Activated B cell treated with CpG ODN at 0.5 μM for 24 hours (primary cell): ENCODE measurements at regions of chr9 and their contacts with region 1.

Region 1: DNA sequence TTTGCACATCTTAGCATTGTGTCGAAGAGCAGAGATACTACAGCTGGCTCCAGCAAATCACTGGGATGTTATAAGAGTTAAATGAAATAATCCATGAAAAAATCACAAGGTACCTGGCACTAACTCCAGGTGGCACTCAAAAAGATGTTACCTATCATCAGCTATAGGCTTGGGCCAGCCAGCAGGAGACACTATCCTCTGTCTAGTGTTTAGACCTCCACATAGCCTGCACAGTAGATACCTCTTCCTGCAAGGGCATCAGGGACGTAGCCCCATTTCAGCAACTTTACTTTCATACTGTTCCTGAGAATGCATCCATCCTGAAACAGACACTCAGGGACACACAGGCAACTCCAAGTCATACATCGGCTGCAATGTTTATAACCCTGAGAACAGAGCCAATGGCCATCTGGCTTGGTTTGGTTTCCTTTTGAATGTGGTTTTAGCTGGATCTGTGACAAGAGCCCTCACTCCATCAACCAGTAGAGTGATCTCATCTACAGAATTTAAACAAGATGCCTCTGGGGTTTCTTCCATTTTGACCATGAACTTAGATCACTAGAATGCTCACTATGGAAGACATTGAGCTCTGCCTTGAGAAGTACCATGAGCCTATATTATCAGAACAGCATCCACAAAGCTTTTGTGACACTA is 69.9 kb downstream of the TLE1 start:
- DNase-seq: no peak
- ATAC-seq: peak; percentile 45
- H3K4me3 Mint-ChIP-seq: peak overlapping the region; percentile 24
- H3K27ac Mint-ChIP-seq: no peak overlapping the region
- H3K4me1 Mint-ChIP-seq: peaks cover 40% of the 10 kb centered on the region
- H3K27me3 Mint-ChIP-seq: no peaks in the 10 kb centered on the region
- CTCF ChIP-seq: no peak

Region 2: GRCh38 chr9:81305561-81306182 is 313.8 kb before region 1 on chr9:
- CTCF ChIA-PET with region 1: no interaction called
- POLR2A ChIA-PET with region 1: no interaction called
- intact Hi-C with region 1: no loop called
- DNase-seq: no peak
- ATAC-seq: no peak
- H3K4me3 Mint-ChIP-seq: no peak overlapping the region
- H3K27ac Mint-ChIP-seq: no peak overlapping the region
- H3K4me1 Mint-ChIP-seq: no peaks in the 10 kb centered on the region
- H3K27me3 Mint-ChIP-seq: no peaks in the 10 kb centered on the region
- CTCF ChIP-seq: no peak

Region 3: GRCh38 chr9:81632599-81632998 is 13.1 kb after region 1 on chr9:
- CTCF ChIA-PET with region 1: no interaction called
- POLR2A ChIA-PET with region 1: interaction called, 4 read pairs
- intact Hi-C with region 1: loop called (anchors 2 kb)
- DNase-seq: no peak
- ATAC-seq: no peak
- H3K4me3 Mint-ChIP-seq: no peak overlapping the region
- H3K27ac Mint-ChIP-seq: no peak overlapping the region
- H3K4me1 Mint-ChIP-seq: peaks cover 34% of the 10 kb centered on the region
- H3K27me3 Mint-ChIP-seq: no peaks in the 10 kb centered on the region
- CTCF ChIP-seq: no peak